A673 (cell line): ENCODE measurements at regions of chr11 and their contacts with region 1.

Region 1: DNA sequence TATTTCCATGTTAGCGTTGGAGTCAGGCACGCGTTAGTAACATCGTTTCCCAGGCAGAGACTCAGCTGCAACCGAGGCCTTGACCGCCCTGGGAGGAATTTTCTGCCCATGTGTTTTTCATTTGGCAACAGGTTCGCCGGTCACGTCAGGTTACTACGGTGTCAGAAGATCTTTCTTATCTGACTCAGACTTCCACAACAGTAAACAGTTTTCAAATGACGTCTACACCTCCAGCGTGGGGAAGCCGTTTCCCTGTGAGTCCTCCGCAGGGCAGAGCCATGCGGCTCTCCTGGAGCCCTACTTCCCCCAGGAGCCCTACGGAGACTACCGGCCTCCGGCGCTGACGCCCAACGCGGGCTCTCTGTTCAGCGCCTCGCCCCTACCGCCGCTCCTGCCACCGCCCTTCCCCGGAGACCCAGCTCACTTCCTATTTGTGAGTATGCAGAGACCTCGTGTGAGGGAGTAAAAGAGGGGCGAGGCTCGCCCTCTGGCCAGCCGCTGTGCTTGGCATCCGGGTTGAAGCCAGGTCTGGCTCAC is 14.3 kb upstream of the POU2AF3 start:
- DNase-seq: no peak
- H3K4me3 ChIP-seq: no peak overlapping the region
- H3K27ac ChIP-seq: no peak overlapping the region
- H3K4me1 ChIP-seq: no peaks in the 10 kb centered on the region
- H3K27me3 ChIP-seq: no peaks in the 10 kb centered on the region
- CTCF ChIP-seq: no peak

Region 2: GRCh38 chr11:111422494-111423249 is 138.7 kb after region 1 on chr11:
- CTCF ChIA-PET with region 1: interaction called, 35 read pairs
- POLR2A ChIA-PET with region 1: no interaction called
- intact Hi-C with region 1: loop called (anchors 1 kb)
- DNase-seq: peak; percentile 82
- H3K4me3 ChIP-seq: no peak overlapping the region
- H3K27ac ChIP-seq: no peak overlapping the region
- H3K4me1 ChIP-seq: peaks cover 15% of the 10 kb centered on the region
- H3K27me3 ChIP-seq: no peaks in the 10 kb centered on the region
- CTCF ChIP-seq: peak; percentile 99

Region 3: DNA sequence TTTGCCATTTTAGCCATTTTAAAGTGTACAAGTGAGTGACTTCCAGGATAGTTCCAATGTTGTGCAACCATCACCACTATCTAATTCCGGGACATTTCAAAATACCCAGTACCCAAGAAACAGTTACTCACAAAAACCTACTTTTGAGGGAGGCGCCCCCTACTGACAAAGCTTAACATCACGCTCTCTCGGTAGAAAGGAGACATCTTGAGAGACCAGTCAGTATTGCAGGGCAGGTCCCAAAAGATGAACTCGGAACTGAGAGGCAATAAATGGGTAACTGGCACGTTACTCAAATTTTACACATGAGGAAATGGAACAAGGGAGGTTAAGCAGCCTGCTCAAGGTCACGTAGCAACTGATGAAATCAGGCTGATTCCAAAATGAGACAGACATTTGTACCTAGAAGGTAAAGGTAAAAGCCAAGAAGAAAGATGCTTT is 145.1 kb after region 1 on chr11:
- CTCF ChIA-PET with region 1: interaction called, 35 read pairs
- POLR2A ChIA-PET with region 1: no interaction called
- intact Hi-C with region 1: no loop called
- DNase-seq: peak; percentile 90
- H3K4me3 ChIP-seq: no peak overlapping the region
- H3K27ac ChIP-seq: no peak overlapping the region
- H3K4me1 ChIP-seq: peaks cover 25% of the 10 kb centered on the region
- H3K27me3 ChIP-seq: no peaks in the 10 kb centered on the region
- CTCF ChIP-seq: peak; percentile 99

Region 4: DNA sequence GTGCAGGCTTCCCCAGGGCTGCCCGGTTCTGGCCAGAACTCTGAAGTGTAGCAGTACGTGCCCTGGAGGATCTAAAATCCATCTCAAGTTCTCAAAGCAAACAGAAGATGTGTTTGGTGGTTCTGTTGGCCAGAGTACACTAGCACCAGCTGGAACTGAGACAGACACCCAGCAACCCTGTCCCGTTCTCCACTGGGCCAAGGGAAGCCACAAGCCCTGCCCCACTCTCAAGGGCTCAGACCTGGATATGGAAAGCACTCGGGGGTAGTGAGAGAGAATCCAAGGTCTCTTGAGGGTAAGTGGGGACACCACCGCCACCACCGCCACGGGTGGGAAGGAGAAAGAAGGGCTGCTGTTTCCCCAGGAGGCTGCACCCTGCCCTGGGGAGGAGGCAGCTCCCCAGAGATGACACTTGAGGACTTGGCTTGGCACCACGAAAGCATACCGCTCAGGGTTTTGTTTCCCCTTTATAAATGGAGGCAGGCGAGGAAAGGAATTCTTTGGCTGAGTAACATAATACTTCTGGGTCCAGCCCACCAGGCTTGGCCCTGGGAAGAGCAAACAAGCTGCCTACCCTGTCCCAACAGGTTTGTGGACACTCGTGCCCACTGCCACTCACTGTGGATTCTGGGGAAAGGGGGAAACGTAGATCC is 151.2 kb after region 1 on chr11:
- CTCF ChIA-PET with region 1: interaction called, 21 read pairs
- POLR2A ChIA-PET with region 1: no interaction called
- intact Hi-C with region 1: no loop called
- DNase-seq: no peak
- H3K4me3 ChIP-seq: no peak overlapping the region
- H3K27ac ChIP-seq: no peak overlapping the region
- H3K4me1 ChIP-seq: peaks cover 13% of the 10 kb centered on the region
- H3K27me3 ChIP-seq: no peaks in the 10 kb centered on the region
- CTCF ChIP-seq: no peak

Region 5: GRCh38 chr11:111446404-111447111 is 162.5 kb after region 1 on chr11:
- CTCF ChIA-PET with region 1: interaction called, 16 read pairs
- POLR2A ChIA-PET with region 1: no interaction called
- intact Hi-C with region 1: loop called (anchors 1 kb)
- DNase-seq: peak; percentile 95
- H3K4me3 ChIP-seq: no peak overlapping the region
- H3K27ac ChIP-seq: no peak overlapping the region
- H3K4me1 ChIP-seq: peaks cover 5% of the 10 kb centered on the region
- H3K27me3 ChIP-seq: no peaks in the 10 kb centered on the region
- CTCF ChIP-seq: peak; percentile 98

Region 6: GRCh38 chr11:111723595-111723994 is 439.6 kb after region 1 on chr11:
- CTCF ChIA-PET with region 1: interaction called, 10 read pairs
- POLR2A ChIA-PET with region 1: no interaction called
- intact Hi-C with region 1: no loop called
- DNase-seq: no peak
- H3K4me3 ChIP-seq: no peak overlapping the region
- H3K27ac ChIP-seq: no peak overlapping the region
- H3K4me1 ChIP-seq: peaks cover 8% of the 10 kb centered on the region
- H3K27me3 ChIP-seq: no peaks in the 10 kb centered on the region
- CTCF ChIP-seq: no peak